Right cardiac atrium (tissue), 5 donors: ENCODE measurements at regions of chr11 and their contacts with region 1.

Region 1: DNA sequence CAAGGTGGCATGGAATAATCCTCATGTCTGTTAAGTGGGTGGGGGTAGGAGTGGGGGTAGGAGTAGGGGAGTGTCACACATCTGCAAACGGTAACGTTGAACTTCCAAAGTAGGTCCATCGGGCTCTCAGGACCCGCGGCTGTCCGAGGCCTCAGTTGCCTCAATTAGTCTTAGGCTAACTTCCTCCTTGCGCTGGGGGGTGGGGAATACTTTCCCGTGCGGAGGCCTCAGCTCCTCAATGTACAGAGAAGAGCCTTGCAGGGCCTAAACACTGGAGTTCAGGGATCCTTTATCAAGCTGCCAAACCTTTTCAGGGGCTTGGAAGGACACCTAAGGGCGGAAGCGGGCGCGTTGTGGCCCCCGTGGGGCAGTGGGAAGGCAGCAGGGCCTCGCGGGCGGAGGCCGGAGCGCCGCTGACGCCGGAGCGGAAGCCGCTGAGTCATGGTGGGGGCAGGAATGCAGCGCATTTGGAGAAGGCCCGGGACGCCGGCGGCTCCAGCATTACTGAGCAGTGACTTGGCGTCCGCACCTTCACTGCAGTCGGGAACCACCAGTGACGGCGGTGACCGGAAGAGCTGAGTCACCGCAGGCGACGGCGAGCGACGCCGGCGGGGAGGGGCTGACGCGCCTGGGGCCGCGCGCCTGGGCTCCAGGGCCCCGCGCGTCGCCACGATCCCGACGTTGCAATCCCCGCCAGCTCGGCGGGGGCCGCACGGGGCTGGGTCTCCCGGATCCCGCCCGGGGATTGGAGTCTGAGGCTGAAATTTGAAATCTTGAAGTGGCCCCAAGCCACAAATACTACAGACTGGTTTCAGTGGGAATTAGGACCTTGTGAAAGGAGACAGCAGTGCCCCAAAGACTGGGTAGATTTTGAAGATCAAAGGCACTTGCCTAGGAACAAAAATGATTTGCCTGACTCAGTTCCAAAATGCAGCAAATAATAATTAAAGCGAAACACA is 20.2 kb upstream of the IPO7 start:
- DNase-seq: peak; percentile 98
- ATAC-seq: peak; percentile 98 to 99
- H3K4me3 ChIP-seq: peak overlapping the region; percentile 53
- H3K27ac ChIP-seq: peak overlapping the region; percentile 99
- H3K4me1 ChIP-seq: no peaks in the 10 kb centered on the region
- H3K27me3 ChIP-seq: no peaks in the 10 kb centered on the region

Region 2: DNA sequence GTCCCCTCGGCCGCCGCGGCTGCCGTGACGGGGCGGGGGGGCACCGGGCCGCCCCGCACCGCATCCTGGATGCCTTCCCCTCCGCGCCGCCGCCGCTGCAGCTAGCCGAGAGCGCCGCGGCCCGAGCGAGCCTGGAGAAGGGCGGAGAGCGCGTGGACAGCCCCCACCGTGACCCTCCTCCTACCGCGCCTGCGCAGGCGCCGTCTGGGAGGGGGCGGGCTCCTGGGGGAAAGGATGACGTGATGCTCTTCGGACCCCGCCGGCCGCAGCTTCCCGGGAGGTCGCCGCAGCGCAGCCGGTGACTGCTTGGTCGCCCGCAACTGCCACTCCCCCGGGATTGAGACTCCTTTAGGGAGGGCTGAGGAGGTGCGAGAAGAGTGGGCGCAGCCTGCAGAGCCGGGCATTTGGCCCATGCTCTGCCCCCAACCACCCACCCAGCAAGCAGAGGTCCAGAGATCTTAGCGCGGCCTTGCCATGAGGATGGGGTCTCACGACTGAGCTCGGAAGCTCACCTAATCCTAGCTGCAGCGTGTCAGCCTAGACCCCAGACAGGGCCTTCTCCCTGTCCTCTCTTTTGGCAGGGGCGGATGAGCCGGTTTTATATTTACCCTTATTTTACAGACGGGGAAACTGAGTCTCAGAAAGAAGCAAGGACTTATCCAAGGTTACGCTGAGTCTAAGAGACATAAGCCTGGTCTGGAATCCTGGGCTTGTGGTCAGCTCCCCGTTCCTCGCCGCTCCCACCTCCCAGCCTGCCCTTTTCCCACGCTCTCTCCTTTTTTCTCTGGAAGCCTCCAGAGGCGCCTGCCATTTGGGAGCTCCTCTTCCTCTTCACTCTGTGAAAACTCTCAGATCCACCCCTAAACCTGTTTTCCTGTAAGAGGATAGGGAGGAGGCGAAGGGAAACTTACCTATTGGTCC is 98.8 kb before region 1 on chr11 and contains the start of gene DENND5A:
- intact Hi-C with region 1: loop called in 1 of 4 experiments (anchors 10 kb)
- DNase-seq: peak; percentile 91 to 96 (median 95)
- ATAC-seq: peak; percentile 93 to 96
- H3K4me3 ChIP-seq: peak within 1 kb of the TSS; percentile 87
- H3K27ac ChIP-seq: peak within 1 kb of the TSS; percentile 90
- H3K4me1 ChIP-seq: peaks cover 2% of the 10 kb centered on the region
- H3K27me3 ChIP-seq: no peaks in the 10 kb centered on the region
- total RNA-seq, gene DENND5A: 84.9 to 121 (median 93.3) TPM